ENCODE measurements at regions of chr3 and their contacts with region 1.

Region 1: DNA sequence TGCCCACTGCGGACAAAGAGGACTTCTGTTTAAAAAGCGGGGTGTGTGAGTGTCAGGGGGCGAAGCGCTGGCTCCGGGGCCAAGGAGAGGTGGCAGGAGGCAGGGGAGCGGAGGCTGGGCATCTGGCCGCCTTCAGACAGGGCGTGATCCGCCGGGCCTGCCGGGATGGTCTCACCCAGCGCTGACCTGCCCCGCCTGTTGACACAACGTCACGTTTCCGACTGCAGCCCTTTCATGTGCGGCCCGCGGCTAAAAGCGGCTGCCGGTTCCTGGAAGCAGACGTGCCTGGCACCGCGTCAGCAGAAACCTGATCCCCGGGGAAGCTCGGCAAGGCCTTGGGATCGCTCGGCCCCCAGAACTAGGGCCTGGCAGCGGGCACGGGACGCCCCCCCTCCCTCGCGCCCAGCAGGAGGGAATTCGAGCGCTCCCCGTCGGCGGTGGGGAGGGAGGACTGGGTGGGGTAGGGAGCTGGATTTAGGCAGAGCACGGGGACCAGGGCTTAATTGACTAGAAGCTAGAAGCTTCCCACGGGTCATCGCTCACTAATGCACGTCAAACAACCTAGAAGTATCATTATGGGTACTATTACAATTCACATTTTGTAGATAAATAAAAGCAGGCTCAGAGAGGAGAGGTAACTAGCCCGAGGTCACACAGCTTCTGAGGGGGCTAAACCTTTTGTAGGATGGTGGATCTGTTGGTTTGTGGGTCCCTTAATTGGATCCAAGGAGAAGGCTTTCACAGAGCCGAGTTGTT is 7.7 kb downstream of the BHLHE40 start:
- H3K4me3 ChIP-seq: peak overlapping the region; percentile 30
- H3K27ac ChIP-seq: peak overlapping the region; percentile 95
- H3K4me1 ChIP-seq: peaks cover 29% of the 10 kb centered on the region
- CTCF ChIP-seq: no peak; the same call in 1 of the 2 replicates

Region 2: GRCh38 chr3:4759689-4760312 is 227.2 kb before region 1 on chr3:
- CTCF ChIA-PET with region 1: no interaction called
- POLR2A ChIA-PET with region 1: no interaction called
- H3K4me3 ChIP-seq: no peak overlapping the region
- H3K27ac ChIP-seq: no peak overlapping the region
- H3K4me1 ChIP-seq: no peaks in the 10 kb centered on the region
- CTCF ChIP-seq: no peak

Region 3: GRCh38 chr3:5002174-5002870 is 15.4 kb after region 1 on chr3:
- CTCF ChIA-PET with region 1: interaction called, 5 read pairs
- POLR2A ChIA-PET with region 1: interaction called, 17 read pairs
- H3K4me3 ChIP-seq: no peak overlapping the region
- H3K27ac ChIP-seq: peak overlapping the region; percentile 43
- H3K4me1 ChIP-seq: peaks cover 17% of the 10 kb centered on the region
- CTCF ChIP-seq: no peak

Region 4: GRCh38 chr3:5016218-5017161 is 29.5 kb after region 1 on chr3:
- CTCF ChIA-PET with region 1: interaction called, 46 read pairs
- POLR2A ChIA-PET with region 1: interaction called, 332 read pairs
- H3K4me3 ChIP-seq: no peak overlapping the region
- H3K27ac ChIP-seq: peak overlapping the region; percentile 39; the same call in 1 of the 2 replicates
- H3K4me1 ChIP-seq: peaks cover 20% of the 10 kb centered on the region
- CTCF ChIP-seq: no peak

Region 5: DNA sequence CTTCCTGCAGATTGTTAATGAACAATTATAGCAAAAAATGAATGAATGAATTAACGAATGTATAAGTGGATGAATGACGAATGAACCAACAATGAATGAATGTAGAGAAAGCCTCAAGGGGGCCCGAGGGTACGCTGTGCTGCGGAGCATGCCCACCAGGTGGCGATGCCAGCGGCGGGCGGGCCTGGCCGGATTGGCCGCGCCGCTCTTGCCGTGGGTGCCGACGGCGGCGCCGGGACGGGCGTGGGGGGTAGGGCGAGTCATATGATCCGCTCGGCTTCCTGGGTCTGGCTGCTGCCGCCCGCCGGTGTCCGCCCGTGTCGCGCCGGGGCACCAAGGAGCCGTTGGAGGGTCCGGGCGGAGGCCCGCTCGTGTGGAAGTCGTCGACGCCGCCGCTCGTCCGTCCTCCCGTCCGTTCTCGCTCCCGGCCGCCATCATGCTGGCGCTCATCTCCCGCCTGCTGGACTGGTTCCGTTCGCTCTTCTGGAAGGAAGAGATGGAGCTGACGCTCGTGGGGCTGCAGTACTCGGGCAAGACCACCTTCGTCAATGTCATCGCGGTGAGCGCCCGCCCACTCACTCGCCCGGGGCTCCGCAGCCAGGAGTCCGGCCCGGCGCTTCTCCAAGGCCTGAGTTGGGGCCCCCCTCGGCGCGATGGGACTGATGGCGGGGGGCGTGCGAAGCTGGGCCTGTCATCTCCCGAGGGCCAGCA is 135.2 kb after region 1 on chr3 and contains the start of gene ARL8B:
- CTCF ChIA-PET with region 1: no interaction called
- POLR2A ChIA-PET with region 1: no interaction called
- H3K4me3 ChIP-seq: peak within 1 kb of the TSS; percentile 91
- H3K27ac ChIP-seq: peak within 1 kb of the TSS; percentile 35; the same call in 1 of the 2 replicates
- H3K4me1 ChIP-seq: peaks cover 3% of the 10 kb centered on the region
- CTCF ChIP-seq: peak; percentile 94

Region 6: GRCh38 chr3:5423076-5423475 is 436.1 kb after region 1 on chr3:
- CTCF ChIA-PET with region 1: no interaction called
- POLR2A ChIA-PET with region 1: no interaction called
- H3K4me3 ChIP-seq: no peak overlapping the region
- H3K27ac ChIP-seq: no peak overlapping the region
- H3K4me1 ChIP-seq: no peaks in the 10 kb centered on the region
- CTCF ChIP-seq: no peak